Aorta (tissue), 5 donors: ENCODE measurements at regions of chr7 and their contacts with region 1.

Region 1: DNA sequence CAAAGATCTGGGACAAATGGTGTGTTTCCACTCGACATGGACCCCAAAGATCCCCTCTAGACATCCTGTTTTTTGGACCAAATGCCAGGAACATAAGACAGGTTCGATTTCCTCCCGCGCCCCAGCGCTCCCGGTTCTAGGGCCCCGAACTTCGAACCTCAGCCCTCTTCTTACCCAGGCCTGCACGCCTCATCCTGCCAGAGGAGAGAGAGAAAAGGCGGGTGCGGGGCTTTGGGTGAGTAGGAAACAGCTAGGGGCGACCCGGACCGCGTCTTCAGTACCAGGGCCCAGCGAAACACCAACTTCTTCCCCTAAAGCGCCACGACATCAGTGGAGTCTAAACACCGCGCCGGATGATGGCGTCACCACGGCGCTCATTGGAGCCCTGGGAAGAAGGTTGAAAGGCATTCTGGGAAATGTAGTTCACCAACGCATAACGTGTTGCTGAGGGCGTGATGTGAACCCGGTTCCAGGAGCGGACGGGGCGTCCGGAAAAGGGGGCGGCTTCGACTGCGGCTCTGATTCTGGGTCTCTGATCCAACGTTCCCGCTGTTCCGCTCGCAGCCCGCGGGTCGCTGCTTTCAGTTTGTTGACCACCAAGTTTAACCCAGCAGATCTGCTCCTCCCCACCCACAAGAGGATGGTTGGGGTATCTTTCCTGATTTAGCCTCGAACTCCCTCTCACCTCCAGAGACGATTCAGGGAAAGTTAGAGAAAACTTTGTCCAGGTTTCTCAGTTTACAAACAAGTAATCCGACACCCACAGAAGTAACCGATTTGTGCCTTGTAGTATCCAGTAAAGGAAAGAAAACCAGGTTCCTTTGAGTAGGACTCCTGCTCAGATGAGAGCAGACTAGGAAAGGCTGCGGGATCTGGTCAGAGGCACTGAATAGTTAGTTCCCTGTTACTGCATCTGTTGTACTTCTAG is at the start of gene BET1:
- DNase-seq: peak; percentile 97 to 98
- ATAC-seq: peak; percentile 100
- H3K4me3 ChIP-seq: peak within 1 kb of the TSS; percentile 92 to 93
- H3K27ac ChIP-seq: peak within 1 kb of the TSS; percentile 44 to 55
- H3K4me1 ChIP-seq: no peaks in the 10 kb centered on the region
- H3K27me3 ChIP-seq: no peaks in the 10 kb centered on the region
- total RNA-seq, gene BET1: 17.4 to 24.3 TPM

Region 2: DNA sequence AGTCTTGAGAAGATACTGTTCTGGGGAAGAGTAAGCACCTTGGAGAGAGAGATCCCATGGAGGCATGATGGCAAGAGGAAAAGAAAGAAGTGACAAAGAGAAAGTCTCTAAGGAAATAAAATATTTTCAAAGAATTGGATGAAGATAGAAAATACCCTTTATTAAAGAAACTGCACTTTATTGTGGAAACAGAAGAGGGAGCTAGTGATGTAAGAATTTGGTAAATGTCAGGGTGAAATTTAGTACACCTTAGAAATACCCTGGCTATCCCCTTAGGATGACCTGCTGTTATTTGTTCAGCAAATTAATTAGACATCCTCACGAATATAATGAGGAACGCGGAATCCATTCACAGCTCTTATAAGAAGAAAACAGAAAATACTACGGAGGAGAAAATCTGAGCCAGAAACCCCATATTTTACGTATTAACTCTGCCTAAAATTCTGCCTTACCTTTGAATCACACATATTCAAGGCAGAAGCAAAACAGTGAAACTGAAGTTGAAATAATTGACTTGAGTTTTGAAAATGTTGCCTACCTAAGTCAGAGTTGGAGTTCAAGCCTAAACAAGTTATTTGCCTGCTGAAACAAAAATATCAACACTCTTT is 204.4 kb before region 1 on chr7:
- intact Hi-C with region 1: loop called in 1 of 2 experiments (anchors 10 kb)
- DNase-seq: no peak
- ATAC-seq: no peak
- H3K4me3 ChIP-seq: no peak overlapping the region
- H3K27ac ChIP-seq: no peak overlapping the region
- H3K4me1 ChIP-seq: no peaks in the 10 kb centered on the region
- H3K27me3 ChIP-seq: no peaks in the 10 kb centered on the region

Region 3: GRCh38 chr7:93921607-93922566 is 82.4 kb before region 1 on chr7 and contains the start of gene GNG11:
- intact Hi-C with region 1: loop called in 1 of 2 experiments (anchors 5 kb)
- DNase-seq: peak; percentile 88 to 92
- ATAC-seq: peak; percentile 94
- H3K4me3 ChIP-seq: peak within 1 kb of the TSS; percentile 82 to 88
- H3K27ac ChIP-seq: peak within 1 kb of the TSS; percentile 68 to 91
- H3K4me1 ChIP-seq: peaks cover 2% of the 10 kb centered on the region in 2 donors
- H3K27me3 ChIP-seq: no peaks in the 10 kb centered on the region
- total RNA-seq, gene GNG11: 9.8 to 24.9 TPM